ENCODE measurements at regions of chr10 and their contacts with region 1.

Region 1: DNA sequence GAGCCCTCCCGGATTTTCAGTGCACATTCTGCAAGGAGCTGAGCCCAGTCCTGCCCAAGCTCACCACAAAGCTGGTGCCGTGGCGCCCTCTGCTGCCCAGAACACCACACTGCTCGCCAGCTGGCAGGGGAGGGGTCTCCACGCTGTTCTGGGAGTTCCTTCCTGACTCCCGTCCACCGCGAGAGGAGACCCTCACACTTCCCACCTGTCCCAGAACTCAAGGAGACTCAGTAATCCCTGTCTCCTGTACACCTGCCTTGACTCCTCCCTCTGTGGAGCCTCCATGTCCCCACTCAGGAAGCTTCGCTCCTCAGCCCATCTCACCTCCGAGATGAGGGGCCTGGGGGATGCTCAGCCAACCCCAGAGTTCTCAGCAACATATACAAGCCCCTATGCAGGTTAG is 11.3 kb downstream of the C10orf105 start:
- DNase-seq: peak; percentile 77
- ATAC-seq: peak; percentile 58
- H3K4me3 Mint-ChIP-seq: no peak overlapping the region
- H3K27ac Mint-ChIP-seq: peak overlapping the region; percentile 20
- H3K4me1 Mint-ChIP-seq: peaks cover 40% of the 10 kb centered on the region
- H3K27me3 Mint-ChIP-seq: no peaks in the 10 kb centered on the region
- CTCF ChIP-seq: peak; percentile 99

Region 2: GRCh38 chr10:71378336-71379117 is 329.8 kb before region 1 on chr10:
- CTCF ChIA-PET with region 1: interaction called, 17 read pairs
- POLR2A ChIA-PET with region 1: no interaction called
- intact Hi-C with region 1: loop called (anchors 10 kb)
- DNase-seq: no peak
- ATAC-seq: no peak
- H3K4me3 Mint-ChIP-seq: no peak overlapping the region
- H3K27ac Mint-ChIP-seq: no peak overlapping the region
- H3K4me1 Mint-ChIP-seq: peaks cover 8% of the 10 kb centered on the region
- H3K27me3 Mint-ChIP-seq: no peaks in the 10 kb centered on the region
- CTCF ChIP-seq: no peak

Region 3: GRCh38 chr10:71454347-71454746 is 254.0 kb before region 1 on chr10:
- CTCF ChIA-PET with region 1: no interaction called
- POLR2A ChIA-PET with region 1: no interaction called
- intact Hi-C with region 1: no loop called
- DNase-seq: no peak
- ATAC-seq: no peak
- H3K4me3 Mint-ChIP-seq: no peak overlapping the region
- H3K27ac Mint-ChIP-seq: no peak overlapping the region
- H3K4me1 Mint-ChIP-seq: no peaks in the 10 kb centered on the region
- H3K27me3 Mint-ChIP-seq: no peaks in the 10 kb centered on the region
- CTCF ChIP-seq: no peak

Region 4: DNA sequence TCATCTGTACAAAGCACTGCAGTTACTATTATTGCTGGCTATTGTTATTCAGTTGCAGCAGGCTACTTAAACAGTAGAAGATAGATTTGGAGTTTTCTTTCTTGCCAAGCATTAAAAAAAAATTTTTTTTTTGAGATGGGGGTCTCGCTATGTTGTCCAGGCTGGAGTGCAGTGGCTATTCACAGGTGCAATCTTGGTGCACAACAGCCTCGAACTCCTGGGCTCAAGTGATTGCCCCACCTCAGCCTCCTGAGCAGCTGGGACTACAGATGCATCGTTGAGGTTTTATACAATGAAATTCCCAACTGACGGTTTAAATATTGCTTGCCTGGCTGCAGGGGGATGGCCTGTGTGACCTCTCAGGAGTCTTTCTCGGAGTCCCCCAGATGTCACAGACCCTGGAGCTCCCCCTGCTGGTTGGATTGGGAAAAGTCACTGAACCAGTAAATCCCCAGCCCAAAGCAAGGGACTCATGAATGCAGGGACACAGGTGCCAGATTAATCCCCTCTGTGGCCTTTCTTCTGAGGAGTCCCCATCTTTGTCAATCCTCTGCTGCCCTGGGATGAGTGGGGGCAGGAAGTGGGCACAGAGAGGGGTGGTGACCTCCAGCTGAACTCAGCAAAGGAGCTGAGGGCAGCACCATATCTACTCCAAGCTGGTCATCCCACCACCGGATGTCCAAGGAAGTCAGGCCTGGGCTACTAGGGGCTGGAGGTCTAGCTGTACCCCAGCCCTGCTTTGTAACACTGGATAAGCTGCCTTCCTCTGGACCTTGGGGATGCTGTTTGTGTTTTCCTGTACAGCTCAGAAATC is 138.3 kb before region 1 on chr10:
- CTCF ChIA-PET with region 1: interaction called, 25 read pairs
- POLR2A ChIA-PET with region 1: no interaction called
- intact Hi-C with region 1: no loop called
- DNase-seq: peak; percentile 87
- ATAC-seq: peak; percentile 79
- H3K4me3 Mint-ChIP-seq: no peak overlapping the region
- H3K27ac Mint-ChIP-seq: no peak overlapping the region
- H3K4me1 Mint-ChIP-seq: no peaks in the 10 kb centered on the region
- H3K27me3 Mint-ChIP-seq: no peaks in the 10 kb centered on the region
- CTCF ChIP-seq: peak; percentile 84

Region 5: GRCh38 chr10:71696628-71697326 is 11.5 kb before region 1 on chr10:
- CTCF ChIA-PET with region 1: interaction called, 189 read pairs
- POLR2A ChIA-PET with region 1: interaction called, 10 read pairs
- intact Hi-C with region 1: no loop called
- DNase-seq: peak; percentile 83
- ATAC-seq: peak; percentile 38
- H3K4me3 Mint-ChIP-seq: no peak overlapping the region
- H3K27ac Mint-ChIP-seq: no peak overlapping the region
- H3K4me1 Mint-ChIP-seq: peaks cover 55% of the 10 kb centered on the region
- H3K27me3 Mint-ChIP-seq: no peaks in the 10 kb centered on the region
- CTCF ChIP-seq: peak; percentile 94

Region 6: GRCh38 chr10:71740069-71740468 is 31.8 kb after region 1 on chr10:
- CTCF ChIA-PET with region 1: interaction called, 12 read pairs
- POLR2A ChIA-PET with region 1: interaction called, 3 read pairs
- intact Hi-C with region 1: no loop called
- DNase-seq: no peak
- ATAC-seq: no peak
- H3K4me3 Mint-ChIP-seq: no peak overlapping the region
- H3K27ac Mint-ChIP-seq: peak overlapping the region; percentile 97
- H3K4me1 Mint-ChIP-seq: peaks cover 100% of the 10 kb centered on the region
- H3K27me3 Mint-ChIP-seq: no peaks in the 10 kb centered on the region
- CTCF ChIP-seq: no peak

Region 7: DNA sequence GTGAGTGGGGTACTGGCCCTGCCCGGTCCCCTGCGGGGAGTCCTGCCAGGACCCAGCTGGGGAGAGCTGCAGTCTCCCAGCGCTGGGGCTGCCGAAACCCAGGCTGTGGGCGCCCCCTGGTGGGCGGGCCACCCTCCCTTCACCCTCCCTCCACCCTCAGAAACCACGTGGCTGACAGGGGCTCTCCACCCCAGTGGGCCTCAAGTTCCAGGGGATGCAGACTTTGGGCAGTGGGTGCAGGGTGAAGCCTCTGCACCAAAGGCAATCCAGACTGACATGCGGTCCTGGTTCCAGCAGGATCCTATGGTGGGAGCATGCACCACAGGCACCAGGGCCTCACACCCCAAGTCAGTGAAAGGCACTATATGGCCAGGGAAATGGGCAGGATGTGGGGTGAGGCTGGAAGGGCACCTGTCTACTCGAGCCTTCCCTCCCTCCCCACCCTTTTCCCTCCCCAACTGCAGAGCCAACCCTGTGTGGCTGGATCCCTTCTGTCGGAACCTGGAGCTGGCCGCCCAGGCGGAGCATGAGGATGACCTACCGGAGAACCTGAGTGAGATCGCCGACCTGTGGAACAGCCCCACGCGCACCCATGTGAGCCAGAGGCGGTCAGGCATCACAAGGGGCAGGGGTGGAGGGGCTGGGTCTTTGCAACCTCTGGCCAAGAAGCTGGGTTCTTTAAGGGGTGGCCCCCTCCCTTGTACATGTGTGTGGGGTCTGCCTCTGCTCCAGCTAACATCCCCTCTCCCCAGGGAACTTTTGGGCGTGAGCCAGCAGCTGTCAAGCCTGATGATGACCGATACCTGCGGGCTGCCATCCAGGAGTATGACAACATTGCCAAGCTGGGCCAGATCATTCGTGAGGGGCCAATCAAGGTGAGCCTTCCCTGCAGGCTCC is 104.0 kb after region 1 on chr10:
- CTCF ChIA-PET with region 1: interaction called, 20 read pairs
- POLR2A ChIA-PET with region 1: interaction called, 3 read pairs
- intact Hi-C with region 1: no loop called
- DNase-seq: peak; percentile 84
- ATAC-seq: peak; percentile 98
- H3K4me3 Mint-ChIP-seq: no peak overlapping the region
- H3K27ac Mint-ChIP-seq: no peak overlapping the region
- H3K4me1 Mint-ChIP-seq: peaks cover 3% of the 10 kb centered on the region
- H3K27me3 Mint-ChIP-seq: no peaks in the 10 kb centered on the region
- CTCF ChIP-seq: peak; percentile 94

Measured in activated CD8-positive, alpha-beta T cell treated with anti-CD3 and anti-CD28 coated beads for 36 hours (primary cell).